B cell (primary cell): ENCODE measurements at regions of chr2 and their contacts with region 1.

Region 1: DNA sequence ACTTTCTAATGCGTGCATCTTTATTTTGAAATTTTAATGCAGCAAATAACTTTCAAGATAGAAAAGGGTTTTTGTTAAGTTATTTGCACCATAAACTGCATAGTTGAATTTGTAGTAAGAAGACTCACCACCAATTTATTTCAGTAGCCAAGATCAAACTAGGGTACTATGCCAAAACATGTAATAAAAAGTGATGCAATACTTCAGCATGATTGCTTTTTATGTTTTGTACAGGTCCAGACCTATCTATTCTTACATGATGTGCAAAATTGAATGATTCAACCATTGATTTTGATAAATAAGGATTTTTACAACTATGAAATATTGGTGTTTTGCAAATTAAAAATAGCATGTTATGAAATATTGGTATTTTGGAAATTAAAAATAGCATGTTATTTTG is 26.7 kb downstream of the AGPS start:
- DNase-seq: no peak
- ATAC-seq: no peak
- H3K4me3 ChIP-seq: no peak overlapping the region
- H3K4me3 Mint-ChIP-seq: no peak overlapping the region
- H3K27ac ChIP-seq: no peak overlapping the region
- H3K27ac Mint-ChIP-seq: no peak overlapping the region
- H3K4me1 ChIP-seq: no peaks in the 10 kb centered on the region
- H3K4me1 Mint-ChIP-seq: peaks cover 2% of the 10 kb centered on the region
- H3K27me3 ChIP-seq: no peaks in the 10 kb centered on the region
- H3K27me3 Mint-ChIP-seq: no peaks in the 10 kb centered on the region
- CTCF ChIP-seq: no peak

Region 2: GRCh38 chr2:177392373-177393202 is 26.7 kb before region 1 on chr2 and contains the start of gene AGPS:
- CTCF ChIA-PET with region 1: interaction called, 10 read pairs
- POLR2A ChIA-PET with region 1: no interaction called
- intact Hi-C with region 1: no loop called
- DNase-seq: peak; percentile 66
- ATAC-seq: peak; percentile 91
- H3K4me3 ChIP-seq: peak within 1 kb of the TSS; percentile 70 to 83 (median 77)
- H3K4me3 Mint-ChIP-seq: peak within 1 kb of the TSS; percentile 91
- H3K27ac ChIP-seq: peak within 1 kb of the TSS in 1 of 2 donors; percentile 47
- H3K27ac Mint-ChIP-seq: peak within 1 kb of the TSS; percentile 87
- H3K4me1 ChIP-seq: peaks cover 19 to 28% of the 10 kb centered on the region in 2 donors
- H3K4me1 Mint-ChIP-seq: peaks cover 42% of the 10 kb centered on the region
- H3K27me3 ChIP-seq: no peaks in the 10 kb centered on the region
- H3K27me3 Mint-ChIP-seq: no peaks in the 10 kb centered on the region
- CTCF ChIP-seq: no peak
- total RNA-seq, gene AGPS: 23.2 and 25.5 TPM in 2 replicates

Region 3: DNA sequence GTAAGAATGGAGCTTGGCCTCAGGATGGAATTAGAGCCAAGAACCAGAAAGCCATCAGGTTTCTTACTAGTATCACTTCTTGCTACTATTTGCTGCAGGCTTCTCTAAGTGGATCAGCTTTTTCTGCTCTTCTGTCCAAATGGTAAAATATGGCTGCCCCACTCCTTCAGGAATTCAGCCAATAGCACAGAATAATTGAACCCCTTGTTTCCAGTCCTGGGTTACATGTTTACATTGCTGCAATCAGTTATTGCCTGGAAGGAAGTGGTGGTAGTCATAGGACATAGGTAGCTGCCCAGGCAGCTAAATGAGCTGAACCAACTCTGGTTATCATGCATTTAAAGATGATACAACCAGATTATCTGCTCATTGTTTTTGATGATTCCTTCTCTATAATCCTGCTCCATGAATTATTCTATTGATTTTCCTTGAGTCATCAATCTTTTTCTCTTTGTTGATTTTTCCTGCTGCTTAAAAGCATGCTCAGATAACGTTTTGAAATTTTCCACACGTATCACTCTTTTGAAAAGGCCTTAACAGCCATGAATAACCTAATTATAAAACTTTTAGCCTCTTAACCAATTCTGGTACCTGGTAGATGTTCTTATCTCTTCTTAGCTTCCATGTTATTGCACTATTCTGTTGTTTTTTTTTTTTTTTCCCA is 14.1 kb before region 1 on chr2:
- CTCF ChIA-PET with region 1: interaction called, 15 read pairs
- POLR2A ChIA-PET with region 1: no interaction called
- intact Hi-C with region 1: no loop called
- DNase-seq: no peak
- ATAC-seq: no peak
- H3K4me3 ChIP-seq: no peak overlapping the region
- H3K4me3 Mint-ChIP-seq: no peak overlapping the region
- H3K27ac ChIP-seq: no peak overlapping the region
- H3K27ac Mint-ChIP-seq: no peak overlapping the region
- H3K4me1 ChIP-seq: no peaks in the 10 kb centered on the region
- H3K4me1 Mint-ChIP-seq: peaks cover 21% of the 10 kb centered on the region
- H3K27me3 ChIP-seq: no peaks in the 10 kb centered on the region
- H3K27me3 Mint-ChIP-seq: no peaks in the 10 kb centered on the region
- CTCF ChIP-seq: no peak

Region 4: DNA sequence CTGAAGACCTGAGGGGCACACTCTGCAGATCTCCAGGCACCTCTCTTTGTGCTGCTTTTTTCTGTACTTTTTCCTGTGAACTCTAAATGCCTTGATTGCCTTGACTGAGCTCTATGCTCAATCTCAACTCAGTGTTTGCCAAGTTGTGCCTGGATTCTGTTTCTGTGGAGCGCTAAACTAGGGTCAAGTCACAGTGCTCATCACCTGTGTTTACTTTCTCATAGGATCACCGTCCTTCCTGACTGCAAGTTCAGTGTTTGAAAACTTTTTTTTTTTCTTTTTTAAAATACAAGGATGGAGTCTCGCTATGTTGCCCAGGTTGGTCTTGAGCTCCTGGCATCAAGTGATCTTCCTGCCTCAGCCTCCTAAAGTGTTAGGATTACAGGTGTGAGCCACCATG is 35.9 kb after region 1 on chr2:
- CTCF ChIA-PET with region 1: no interaction called
- POLR2A ChIA-PET with region 1: no interaction called
- intact Hi-C with region 1: no loop called
- DNase-seq: no peak
- ATAC-seq: no peak
- H3K4me3 ChIP-seq: no peak overlapping the region
- H3K4me3 Mint-ChIP-seq: no peak overlapping the region
- H3K27ac ChIP-seq: no peak overlapping the region
- H3K27ac Mint-ChIP-seq: no peak overlapping the region
- H3K4me1 ChIP-seq: no peaks in the 10 kb centered on the region
- H3K4me1 Mint-ChIP-seq: no peaks in the 10 kb centered on the region
- H3K27me3 ChIP-seq: no peaks in the 10 kb centered on the region
- H3K27me3 Mint-ChIP-seq: no peaks in the 10 kb centered on the region
- CTCF ChIP-seq: no peak

Region 5: DNA sequence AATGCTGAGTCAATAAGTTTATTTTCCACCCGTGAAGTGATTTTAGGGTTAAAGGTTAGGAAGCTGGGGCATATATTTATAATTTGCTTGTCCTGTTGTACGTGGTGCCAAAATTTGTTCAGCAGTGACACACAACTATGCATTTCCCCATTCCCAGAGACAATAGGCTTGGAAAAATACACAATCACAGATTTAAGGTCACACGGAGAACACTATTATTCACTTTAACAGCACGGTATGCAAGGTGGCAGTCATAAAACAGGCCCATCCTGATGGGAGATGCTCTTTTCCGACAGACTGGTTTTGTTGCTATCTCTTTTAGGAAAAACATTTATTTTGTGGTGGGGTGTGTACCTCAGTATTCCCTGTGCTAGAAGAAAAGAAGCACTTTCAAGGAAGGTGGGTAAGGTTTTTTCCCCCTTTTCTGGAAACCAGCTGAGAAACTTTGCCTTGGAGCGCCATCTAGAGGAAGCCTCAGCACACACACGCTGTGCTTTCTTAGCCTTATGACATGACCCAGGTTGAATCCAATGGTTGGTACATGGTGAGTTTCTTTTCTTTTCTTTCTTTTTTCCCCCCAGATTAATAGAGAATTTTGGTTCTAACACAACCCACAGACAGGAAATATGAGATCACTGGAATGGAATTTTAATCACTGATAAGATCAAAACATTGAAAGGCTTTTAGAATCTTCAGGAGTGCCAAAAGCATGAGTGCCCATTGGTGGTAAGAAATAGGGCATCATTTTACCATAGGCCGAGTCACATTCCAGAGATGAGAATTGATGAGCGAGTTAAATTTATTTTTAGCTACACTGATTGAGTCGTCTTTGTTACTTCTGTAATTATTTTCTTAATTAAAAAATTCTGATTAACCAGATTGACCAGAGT is 305.4 kb after region 1 on chr2:
- CTCF ChIA-PET with region 1: interaction called, 8 read pairs
- POLR2A ChIA-PET with region 1: no interaction called
- intact Hi-C with region 1: loop called (anchors 10 kb)
- DNase-seq: peak; percentile 42
- ATAC-seq: peak; percentile 51
- H3K4me3 ChIP-seq: no peak overlapping the region
- H3K4me3 Mint-ChIP-seq: no peak overlapping the region
- H3K27ac ChIP-seq: no peak overlapping the region
- H3K27ac Mint-ChIP-seq: no peak overlapping the region
- H3K4me1 ChIP-seq: no peaks in the 10 kb centered on the region
- H3K4me1 Mint-ChIP-seq: no peaks in the 10 kb centered on the region
- H3K27me3 ChIP-seq: peaks cover 0 to 3% (median 0%) of the 10 kb centered on the region in 4 experiments
- H3K27me3 Mint-ChIP-seq: peaks cover 38% of the 10 kb centered on the region
- CTCF ChIP-seq: peak; percentile 87